ENCODE measurements at regions of chr3 and their contacts with region 1.

Region 1: DNA sequence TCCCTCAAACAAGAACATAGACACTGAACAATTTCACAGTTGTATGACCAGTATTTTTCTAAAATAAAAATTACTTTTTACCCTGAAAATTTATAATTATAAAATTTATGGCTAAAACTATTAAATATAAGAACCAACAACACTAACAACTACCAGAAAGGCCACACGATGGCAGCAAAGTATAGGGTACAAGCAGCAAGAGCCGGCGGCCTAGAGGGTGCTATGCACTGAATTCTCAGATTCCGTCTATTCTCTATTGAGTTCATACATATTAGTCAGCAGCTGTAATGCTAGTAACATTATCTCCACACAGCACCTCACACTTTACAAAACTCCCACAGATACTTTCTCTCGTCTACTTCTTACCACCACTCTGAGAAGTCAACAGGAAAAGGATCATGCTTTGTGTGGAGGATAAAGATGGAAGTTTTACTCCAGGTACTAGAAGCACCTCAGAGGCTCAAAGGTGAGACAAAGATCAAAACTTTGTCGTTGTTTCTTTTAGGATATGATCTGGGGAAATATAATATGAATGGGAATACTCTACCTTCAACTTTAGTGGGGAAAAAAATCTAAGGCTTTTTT is 160.5 kb downstream of the FGF12 start:
- DNase-seq: peak; percentile 67
- ATAC-seq: peak; percentile 68

Region 2: GRCh38 chr3:192299921-192300320 is 266.9 kb before region 1 on chr3:
- intact Hi-C with region 1: no loop called
- DNase-seq: no peak
- ATAC-seq: no peak

Region 3: GRCh38 chr3:192481638-192482037 is 85.2 kb before region 1 on chr3:
- intact Hi-C with region 1: loop called (anchors 10 kb)
- DNase-seq: no peak
- ATAC-seq: no peak

Region 4: DNA sequence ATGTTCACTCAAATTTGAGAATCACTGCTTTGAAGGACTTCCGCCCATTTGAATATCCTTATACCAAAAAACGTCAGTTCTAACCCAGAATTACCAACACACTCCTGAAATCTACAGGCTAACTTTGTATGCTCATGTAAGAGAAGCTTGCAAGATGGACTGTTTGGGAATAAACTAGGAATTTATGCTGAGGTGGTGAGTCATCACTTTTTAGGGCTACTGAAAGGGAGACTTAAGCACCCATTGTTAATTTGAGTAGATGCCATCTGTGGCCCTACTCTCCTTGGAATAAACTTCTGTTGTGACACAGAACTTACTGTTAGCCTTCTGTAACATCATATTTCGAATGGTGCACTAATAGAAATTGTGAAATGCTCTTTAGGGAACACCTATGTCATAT is 85.9 kb after region 1 on chr3:
- intact Hi-C with region 1: no loop called
- DNase-seq: no peak
- ATAC-seq: no peak

Region 5: GRCh38 chr3:192772240-192772894 is 205.6 kb after region 1 on chr3:
- intact Hi-C with region 1: loop called (anchors 5 kb)
- DNase-seq: peak; percentile 59
- ATAC-seq: peak; percentile 95

Region 6: DNA sequence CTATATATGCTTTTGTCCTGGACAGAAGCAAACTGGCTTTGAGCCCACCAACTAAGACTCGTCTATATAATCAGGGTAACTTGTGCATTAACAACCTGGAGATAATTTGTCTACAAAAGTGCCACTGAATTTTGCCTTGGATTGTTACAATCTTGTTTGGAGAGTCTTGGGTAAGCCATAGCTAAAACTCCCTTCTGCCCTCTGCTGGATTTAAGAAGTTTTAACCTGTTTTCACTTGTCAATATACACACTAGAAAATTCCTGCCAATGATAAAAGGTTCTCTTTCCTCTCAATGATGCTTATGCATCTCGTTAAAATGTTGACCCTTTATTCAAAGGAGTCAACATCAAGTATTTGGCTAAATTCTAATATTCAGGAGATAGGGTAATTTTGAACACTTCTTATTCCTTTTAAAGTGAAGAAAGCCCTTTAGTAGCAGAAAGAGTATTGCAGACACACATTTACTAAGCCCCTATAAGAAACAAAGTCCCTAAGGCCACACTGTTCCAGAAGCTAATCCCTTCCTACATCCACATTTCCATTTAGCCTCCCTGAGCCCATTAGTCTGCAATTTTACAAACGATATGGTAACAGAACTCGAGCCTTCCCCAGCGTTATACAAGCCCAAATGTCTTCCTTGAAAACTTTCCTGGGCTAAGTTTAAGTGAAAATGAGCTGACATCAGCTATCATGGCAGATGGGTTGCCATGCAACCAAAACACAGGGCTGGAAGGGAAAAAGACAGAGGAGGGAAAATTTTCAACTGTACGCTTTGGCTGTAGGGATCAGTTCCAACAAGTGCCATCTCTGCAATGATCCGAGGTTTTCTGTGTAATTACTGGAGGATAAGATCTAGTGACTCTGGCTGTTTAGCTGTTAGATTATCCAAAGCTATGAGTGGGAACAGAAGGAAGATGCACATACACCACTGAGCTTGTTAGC is 236.4 kb after region 1 on chr3:
- intact Hi-C with region 1: loop called (anchors 5 kb)
- DNase-seq: no peak
- ATAC-seq: peak; percentile 66

Measured in left ventricle myocardium superior (tissue), 1 donor.